ENCODE measurements at regions of chr11 and their contacts with region 1.

Region 1: DNA sequence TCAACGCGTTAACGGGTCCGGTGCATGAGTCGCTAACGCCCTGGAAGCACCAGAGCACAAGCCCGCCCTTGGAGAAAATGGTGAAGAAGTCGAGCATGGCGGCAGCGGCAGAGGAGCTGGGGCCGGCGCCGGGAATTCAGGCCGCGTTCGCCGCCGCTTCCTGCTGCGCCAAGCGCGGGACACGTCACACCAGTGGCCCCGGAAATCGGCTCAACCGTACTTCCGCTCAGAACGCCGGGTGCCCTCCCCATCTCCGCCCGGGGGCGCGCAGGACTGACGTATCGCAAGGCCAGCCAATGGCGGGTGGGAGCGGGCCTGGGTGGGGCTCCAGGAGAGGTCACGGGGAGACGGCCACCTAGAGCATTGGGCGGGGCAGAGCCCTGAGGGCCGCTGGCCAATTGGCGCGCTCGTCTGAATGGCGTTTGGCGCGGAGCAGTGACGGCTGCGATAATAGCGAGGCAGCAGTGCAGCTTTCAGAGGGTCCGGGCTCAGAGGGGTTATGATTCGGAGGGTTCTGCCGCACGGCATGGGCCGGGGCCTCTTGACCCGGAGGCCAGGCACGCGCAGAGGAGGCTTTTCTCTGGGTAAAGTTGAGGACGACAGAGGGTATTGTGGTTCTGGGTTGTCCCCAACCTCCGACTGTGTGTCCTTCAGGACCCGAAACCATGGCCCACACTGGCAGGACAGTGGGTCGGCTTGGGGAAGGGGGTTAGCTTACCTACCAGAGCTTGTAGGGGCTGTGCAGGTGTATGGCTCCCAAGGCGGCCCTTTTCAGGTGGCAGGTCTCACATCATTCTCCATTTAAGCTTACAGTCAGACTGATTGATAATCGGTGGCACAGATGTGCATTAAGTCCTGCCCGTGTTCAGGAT is at the starts of genes FOXRED1 and SRPRA:
- DNase-seq: peak; percentile 100
- H3K4me3 ChIP-seq: peak within 1 kb of the TSS; percentile 74 to 91 (median 80)
- H3K27ac ChIP-seq: peak within 1 kb of the TSS; percentile 82 to 92 (median 90)
- H3K4me1 ChIP-seq: peaks cover 0 to 24% (median 16%) of the 10 kb centered on the region in 4 donors
- H3K27me3 ChIP-seq: no peaks in the 10 kb centered on the region
- CTCF ChIP-seq: no peak
- EP300 ChIP-seq: peak in 2 of 4 donors; percentile 75 to 79
- POLR2A ChIP-seq: peak; percentile 70 to 75
- total RNA-seq, gene FOXRED1: 14.5 to 46.0 (median 15.3) TPM
- total RNA-seq, gene SRPRA: 51.0 to 66.5 (median 57.2) TPM

Region 2: DNA sequence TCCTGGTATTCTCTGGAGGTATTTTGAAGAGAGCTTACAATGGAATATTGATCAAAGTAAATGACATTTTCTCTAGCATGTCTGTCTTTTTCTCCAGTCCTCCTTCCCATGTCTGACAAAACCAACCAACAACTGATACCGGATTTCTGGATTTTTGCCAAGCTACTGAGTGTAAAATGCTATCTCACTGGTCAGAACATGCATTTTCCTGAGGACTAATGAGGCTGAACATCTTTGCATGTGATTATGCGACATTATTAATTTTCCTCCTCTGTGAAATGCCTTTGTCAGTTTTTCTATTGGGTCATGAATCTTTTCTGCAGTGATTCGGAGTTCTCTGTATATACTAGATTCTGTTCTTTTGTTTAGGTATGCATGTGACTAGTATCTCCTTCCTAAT is 257.7 kb before region 1 on chr11:
- intact Hi-C with region 1: no loop called
- DNase-seq: no peak
- H3K4me3 ChIP-seq: no peak overlapping the region
- H3K27ac ChIP-seq: no peak overlapping the region
- H3K4me1 ChIP-seq: peaks cover 0 to 20% (median 16%) of the 10 kb centered on the region in 4 donors
- H3K27me3 ChIP-seq: no peaks in the 10 kb centered on the region
- CTCF ChIP-seq: no peak
- EP300 ChIP-seq: no peak
- POLR2A ChIP-seq: no peak

Region 3: DNA sequence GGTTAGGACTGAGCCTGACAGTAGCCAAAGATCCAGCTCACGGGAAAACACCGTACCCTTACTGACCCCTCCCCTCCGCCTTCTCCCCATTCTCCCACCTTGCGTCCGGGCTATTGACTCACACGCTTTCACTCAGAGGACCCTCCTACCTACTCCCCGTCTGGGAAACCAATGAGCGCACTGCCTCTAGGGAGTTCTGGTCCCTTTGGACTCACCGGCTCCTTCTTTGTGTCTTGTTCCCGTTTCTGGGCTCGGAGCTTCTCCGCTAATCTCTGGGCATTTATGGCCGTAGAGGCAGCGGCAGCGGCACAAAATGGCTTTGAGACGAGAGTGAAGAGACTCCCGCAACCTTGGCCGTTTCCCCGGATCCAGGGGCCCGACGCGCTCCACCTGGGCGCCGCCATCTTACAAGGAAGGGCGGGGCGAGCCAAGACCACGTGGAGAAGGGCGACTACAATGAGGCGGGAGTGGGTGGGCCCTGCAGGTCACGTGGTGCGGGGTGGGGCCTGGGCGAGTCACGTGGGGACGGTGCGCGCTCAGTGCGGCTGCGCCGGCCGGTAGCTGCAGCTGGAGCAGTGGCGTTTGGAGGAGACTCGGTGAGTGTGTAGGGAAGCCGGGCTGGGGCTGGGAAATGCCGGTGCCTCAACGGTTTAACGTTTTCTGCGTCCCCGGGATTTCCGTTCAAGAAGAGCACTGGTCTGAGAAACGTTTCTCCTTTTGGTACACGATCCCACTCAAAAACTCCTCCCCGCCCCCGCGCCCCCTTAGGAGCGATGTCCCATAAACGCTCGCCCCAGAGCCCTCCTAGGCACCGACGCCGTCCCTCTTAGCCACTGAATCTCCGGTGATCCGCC is 57.5 kb before region 1 on chr11 and contains the starts of genes FAM118B and RPUSD4:
- intact Hi-C with region 1: loop called (anchors 2 kb)
- DNase-seq: peak; percentile 99
- H3K4me3 ChIP-seq: peak within 1 kb of the TSS; percentile 66 to 92 (median 76)
- H3K27ac ChIP-seq: peak within 1 kb of the TSS; percentile 74 to 78 (median 76)
- H3K4me1 ChIP-seq: peaks cover 0 to 28% (median 21%) of the 10 kb centered on the region in 4 donors
- H3K27me3 ChIP-seq: no peaks in the 10 kb centered on the region
- CTCF ChIP-seq: no peak
- EP300 ChIP-seq: no peak
- POLR2A ChIP-seq: peak; percentile 73 to 81
- total RNA-seq, gene FAM118B: 13.3 to 22.2 (median 16.2) TPM
- total RNA-seq, gene RPUSD4: 14.3 to 24.4 (median 17.6) TPM

Region 4: DNA sequence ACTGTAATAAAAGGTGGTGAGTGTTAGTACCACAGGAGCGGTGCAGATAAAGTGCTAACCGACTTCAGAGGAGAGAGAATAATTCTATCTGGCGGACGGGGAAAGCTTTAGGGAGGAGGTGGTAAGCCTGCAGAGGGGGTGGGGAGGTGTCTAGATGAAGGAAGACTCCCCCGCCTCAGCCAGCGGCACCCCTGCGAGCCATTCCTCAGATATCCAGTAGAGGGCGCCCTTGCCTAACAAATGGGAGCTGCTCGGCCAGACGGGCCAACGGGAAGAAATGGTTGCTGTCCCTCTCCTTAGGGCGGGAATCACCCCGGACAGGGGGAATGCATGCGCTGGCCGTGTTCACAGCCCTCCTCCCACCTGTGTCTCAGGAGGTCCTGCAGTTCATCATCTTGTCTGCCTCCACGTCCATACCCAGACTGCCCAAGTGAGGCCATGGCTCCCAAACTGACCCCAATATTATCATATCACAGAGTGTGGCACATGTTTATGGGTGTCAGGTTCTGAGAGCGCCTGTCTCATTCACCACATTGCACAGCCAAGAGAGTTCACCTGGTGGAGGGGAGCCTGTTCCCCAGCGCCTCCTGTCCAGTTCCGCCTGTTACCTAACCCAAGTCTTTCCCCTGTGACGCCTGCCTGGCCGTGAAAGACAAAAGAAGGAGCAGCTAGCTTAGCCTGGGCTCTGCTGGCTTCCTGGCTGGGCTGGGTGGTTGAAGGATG is 172.0 kb after region 1 on chr11:
- intact Hi-C with region 1: no loop called
- DNase-seq: peak; percentile 86
- H3K4me3 ChIP-seq: no peak overlapping the region
- H3K27ac ChIP-seq: no peak overlapping the region
- H3K4me1 ChIP-seq: peaks cover 0 to 7% (median 0%) of the 10 kb centered on the region in 4 donors
- H3K27me3 ChIP-seq: peaks cover 0 to 8% (median 0%) of the 10 kb centered on the region in 3 donors
- CTCF ChIP-seq: peak; percentile 91 to 97 (median 94)
- EP300 ChIP-seq: no peak
- POLR2A ChIP-seq: no peak